ENCODE measurements at regions of chr2 and their contacts with region 1.

Region 1: DNA sequence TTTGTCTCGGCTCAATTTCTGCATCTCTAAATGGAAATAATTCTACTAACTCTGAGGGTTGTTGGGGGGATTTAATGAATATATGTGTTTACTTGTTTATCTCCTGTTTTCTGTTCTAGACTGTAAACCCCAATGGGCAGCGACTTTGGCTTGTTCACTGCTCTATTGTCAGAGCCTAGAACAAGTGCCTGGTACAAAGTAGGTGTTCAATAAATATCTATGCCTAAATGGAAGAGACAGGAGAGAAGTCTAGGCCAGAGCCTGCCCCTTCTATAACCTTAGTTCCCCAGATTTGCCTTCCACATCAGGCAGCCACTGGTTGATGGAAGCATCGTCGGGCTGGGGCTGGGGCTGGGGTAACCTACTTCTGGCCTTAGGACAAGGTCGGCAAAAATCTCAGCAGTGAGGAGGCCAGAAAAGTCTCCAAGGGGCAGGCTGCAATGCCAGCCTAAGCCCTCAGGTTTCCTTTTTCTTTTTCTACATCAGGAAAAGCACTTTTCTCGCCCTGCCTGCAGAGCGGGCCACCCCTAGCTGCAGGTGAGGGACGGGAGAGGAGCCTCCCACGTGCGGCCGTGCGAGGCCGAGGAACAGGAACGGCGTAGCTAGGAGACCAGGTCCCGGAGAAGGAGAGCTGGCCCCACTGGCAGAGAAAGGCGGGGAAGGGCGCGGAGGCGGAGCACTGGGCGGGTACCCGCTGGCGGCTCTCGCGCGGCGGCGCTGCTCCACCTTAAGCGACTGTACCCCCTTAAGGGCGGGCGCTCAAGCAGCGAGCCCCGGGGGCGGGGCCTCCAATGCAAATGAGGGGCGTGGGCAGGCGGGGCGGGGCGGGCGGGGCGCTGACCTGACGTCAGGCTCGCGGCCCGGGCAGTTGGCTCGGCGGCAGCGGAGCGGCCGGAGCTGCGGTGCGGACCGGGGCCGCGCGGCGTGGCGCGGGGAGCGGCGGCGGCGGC is at the start of gene CNNM4:
- DNase-seq: peak; percentile 89
- H3K4me3 Mint-ChIP-seq: peak within 1 kb of the TSS; percentile 92
- H3K27ac Mint-ChIP-seq: peak within 1 kb of the TSS; percentile 88
- H3K4me1 Mint-ChIP-seq: peaks cover 54% of the 10 kb centered on the region
- H3K27me3 Mint-ChIP-seq: no peaks in the 10 kb centered on the region
- total RNA-seq, gene CNNM4: 9.9 and 11.1 TPM in 2 replicates

Region 2: DNA sequence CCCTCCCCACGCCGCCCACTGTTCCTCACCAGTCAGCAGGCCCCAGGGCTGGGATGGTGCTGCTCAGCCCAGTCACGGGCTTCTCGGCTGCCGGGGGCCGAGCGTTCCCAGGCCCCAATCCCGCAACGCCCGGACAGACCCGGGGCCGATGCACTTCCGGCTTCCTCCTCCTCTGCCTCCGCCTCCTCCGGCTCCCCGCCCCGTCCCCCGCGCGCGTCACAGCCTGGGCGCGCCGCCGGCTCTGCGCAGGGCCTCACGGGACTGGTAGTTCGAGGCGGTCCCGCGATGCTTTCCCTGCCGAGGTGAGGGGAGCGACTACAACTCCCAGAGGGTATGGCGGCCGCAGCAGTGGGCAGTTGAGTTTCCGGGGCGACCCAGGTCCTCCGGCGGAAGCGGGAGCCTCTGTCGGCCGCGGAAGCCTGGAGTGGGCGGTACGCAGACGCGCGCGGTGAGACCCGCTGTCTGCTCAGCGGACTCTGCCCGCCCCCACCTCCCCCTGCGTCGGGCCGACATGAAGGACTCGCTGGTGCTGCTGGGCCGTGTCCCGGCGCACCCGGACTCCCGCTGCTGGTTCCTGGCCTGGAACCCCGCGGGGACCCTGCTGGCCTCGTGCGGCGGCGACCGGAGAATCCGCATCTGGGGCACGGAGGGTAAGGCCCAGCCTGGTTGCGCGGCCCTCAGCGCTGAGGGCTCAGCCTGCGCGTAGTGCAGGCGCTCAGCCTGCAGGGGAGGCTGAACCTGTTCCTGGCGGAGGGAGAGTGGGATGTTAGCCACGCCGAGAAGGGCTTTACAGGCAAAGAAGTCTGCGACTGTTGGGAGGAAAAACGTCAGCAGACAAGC is 494.3 kb before region 1 on chr2 and contains the starts of genes CIAO1 and TMEM127:
- intact Hi-C with region 1: loop called (anchors 1 kb)
- DNase-seq: peak; percentile 99
- H3K4me3 Mint-ChIP-seq: peak within 1 kb of the TSS; percentile 96
- H3K27ac Mint-ChIP-seq: peak within 1 kb of the TSS; percentile 94
- H3K4me1 Mint-ChIP-seq: peaks cover 33% of the 10 kb centered on the region
- H3K27me3 Mint-ChIP-seq: no peaks in the 10 kb centered on the region
- total RNA-seq, gene CIAO1: 111 and 115 TPM in 2 replicates
- total RNA-seq, gene TMEM127: 29.7 and 30.1 TPM in 2 replicates

Region 3: GRCh38 chr2:96618604-96619283 is 141.6 kb before region 1 on chr2:
- intact Hi-C with region 1: loop called (anchors 5 kb)
- DNase-seq: no peak
- H3K4me3 Mint-ChIP-seq: no peak overlapping the region
- H3K27ac Mint-ChIP-seq: peak overlapping the region; percentile 2
- H3K4me1 Mint-ChIP-seq: peaks cover 42% of the 10 kb centered on the region
- H3K27me3 Mint-ChIP-seq: no peaks in the 10 kb centered on the region

Region 4: GRCh38 chr2:96665083-96665569 is 95.2 kb before region 1 on chr2:
- intact Hi-C with region 1: no loop called
- DNase-seq: no peak
- H3K4me3 Mint-ChIP-seq: no peak overlapping the region
- H3K27ac Mint-ChIP-seq: no peak overlapping the region
- H3K4me1 Mint-ChIP-seq: no peaks in the 10 kb centered on the region
- H3K27me3 Mint-ChIP-seq: no peaks in the 10 kb centered on the region

Region 5: DNA sequence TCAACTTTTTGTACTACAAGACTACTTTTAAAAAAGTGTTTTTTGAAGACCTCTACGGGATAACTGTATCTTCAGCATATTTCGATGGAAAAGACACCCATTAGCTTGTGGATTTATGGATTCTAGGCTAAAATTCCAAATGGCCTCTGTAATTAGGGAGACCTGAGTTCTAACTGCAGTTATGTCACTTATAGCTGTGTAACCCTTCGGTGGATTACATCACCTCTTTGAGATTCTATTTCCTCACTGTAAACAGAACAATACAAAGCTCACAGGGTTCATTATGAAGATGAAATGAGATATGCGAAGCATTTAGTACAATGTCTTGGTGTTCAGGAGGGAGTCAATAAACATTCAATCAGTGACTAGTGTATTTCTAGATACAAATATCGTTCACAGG is 44.7 kb before region 1 on chr2:
- intact Hi-C with region 1: no loop called
- DNase-seq: no peak
- H3K4me3 Mint-ChIP-seq: no peak overlapping the region
- H3K27ac Mint-ChIP-seq: no peak overlapping the region
- H3K4me1 Mint-ChIP-seq: no peaks in the 10 kb centered on the region
- H3K27me3 Mint-ChIP-seq: no peaks in the 10 kb centered on the region

Region 6: DNA sequence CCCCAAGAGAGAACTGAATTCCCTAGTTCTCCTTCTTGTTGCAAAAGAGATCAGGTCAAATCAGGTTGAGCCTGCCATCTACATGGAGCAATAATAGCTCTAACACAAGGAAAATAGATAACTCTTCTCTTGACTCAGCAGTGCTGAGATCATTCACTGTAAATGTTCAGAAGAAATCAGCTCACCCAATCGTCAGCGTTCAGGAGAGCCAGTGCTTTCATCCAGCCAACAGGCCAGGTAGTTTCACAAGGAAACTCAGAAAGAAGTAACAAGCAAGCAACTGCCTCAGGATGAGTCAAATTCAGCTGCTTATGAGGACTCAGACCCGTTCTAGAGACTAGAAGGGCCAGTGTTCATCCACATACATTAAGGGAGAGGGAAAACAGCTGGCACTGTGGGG is 26.4 kb before region 1 on chr2:
- intact Hi-C with region 1: no loop called
- DNase-seq: no peak
- H3K4me3 Mint-ChIP-seq: no peak overlapping the region
- H3K27ac Mint-ChIP-seq: no peak overlapping the region
- H3K4me1 Mint-ChIP-seq: peaks cover 21% of the 10 kb centered on the region
- H3K27me3 Mint-ChIP-seq: no peaks in the 10 kb centered on the region

Region 7: GRCh38 chr2:96773922-96774321 is 13.6 kb after region 1 on chr2:
- intact Hi-C with region 1: loop called (anchors 1 kb)
- DNase-seq: peak; percentile 29
- H3K4me3 Mint-ChIP-seq: peak overlapping the region; percentile 67
- H3K27ac Mint-ChIP-seq: peak overlapping the region; percentile 75
- H3K4me1 Mint-ChIP-seq: peaks cover 33% of the 10 kb centered on the region
- H3K27me3 Mint-ChIP-seq: no peaks in the 10 kb centered on the region

Region 8: GRCh38 chr2:96816128-96816835 is 56.0 kb after region 1 on chr2 and contains the start of gene CNNM3:
- intact Hi-C with region 1: loop called (anchors 1 kb)
- DNase-seq: peak; percentile 97
- H3K4me3 Mint-ChIP-seq: peak within 1 kb of the TSS; percentile 93
- H3K27ac Mint-ChIP-seq: peak within 1 kb of the TSS; percentile 91
- H3K4me1 Mint-ChIP-seq: peaks cover 54% of the 10 kb centered on the region
- H3K27me3 Mint-ChIP-seq: no peaks in the 10 kb centered on the region
- total RNA-seq, gene CNNM3: 26.1 and 31.4 TPM in 2 replicates

Region 9: GRCh38 chr2:96960153-96960961 is 200.0 kb after region 1 on chr2:
- intact Hi-C with region 1: loop called (anchors 5 kb)
- DNase-seq: peak; percentile 70
- H3K4me3 Mint-ChIP-seq: peak overlapping the region; percentile 47
- H3K27ac Mint-ChIP-seq: peak overlapping the region; percentile 67
- H3K4me1 Mint-ChIP-seq: peaks cover 55% of the 10 kb centered on the region
- H3K27me3 Mint-ChIP-seq: no peaks in the 10 kb centered on the region